Activated naive CD4-positive, alpha-beta T cell treated with anti-CD3 and anti-CD28 coated beads for 36 hours (primary cell): ENCODE measurements at regions of chr18 and their contacts with region 1.

Region 1: GRCh38 chr18:48777026-48777743 is 173.6 kb downstream of the SMAD7 start:
- DNase-seq: peak; percentile 71
- H3K4me3 Mint-ChIP-seq: no peak overlapping the region
- H3K27ac Mint-ChIP-seq: no peak overlapping the region
- H3K4me1 Mint-ChIP-seq: peaks cover 3% of the 10 kb centered on the region
- H3K27me3 Mint-ChIP-seq: no peaks in the 10 kb centered on the region

Region 2: DNA sequence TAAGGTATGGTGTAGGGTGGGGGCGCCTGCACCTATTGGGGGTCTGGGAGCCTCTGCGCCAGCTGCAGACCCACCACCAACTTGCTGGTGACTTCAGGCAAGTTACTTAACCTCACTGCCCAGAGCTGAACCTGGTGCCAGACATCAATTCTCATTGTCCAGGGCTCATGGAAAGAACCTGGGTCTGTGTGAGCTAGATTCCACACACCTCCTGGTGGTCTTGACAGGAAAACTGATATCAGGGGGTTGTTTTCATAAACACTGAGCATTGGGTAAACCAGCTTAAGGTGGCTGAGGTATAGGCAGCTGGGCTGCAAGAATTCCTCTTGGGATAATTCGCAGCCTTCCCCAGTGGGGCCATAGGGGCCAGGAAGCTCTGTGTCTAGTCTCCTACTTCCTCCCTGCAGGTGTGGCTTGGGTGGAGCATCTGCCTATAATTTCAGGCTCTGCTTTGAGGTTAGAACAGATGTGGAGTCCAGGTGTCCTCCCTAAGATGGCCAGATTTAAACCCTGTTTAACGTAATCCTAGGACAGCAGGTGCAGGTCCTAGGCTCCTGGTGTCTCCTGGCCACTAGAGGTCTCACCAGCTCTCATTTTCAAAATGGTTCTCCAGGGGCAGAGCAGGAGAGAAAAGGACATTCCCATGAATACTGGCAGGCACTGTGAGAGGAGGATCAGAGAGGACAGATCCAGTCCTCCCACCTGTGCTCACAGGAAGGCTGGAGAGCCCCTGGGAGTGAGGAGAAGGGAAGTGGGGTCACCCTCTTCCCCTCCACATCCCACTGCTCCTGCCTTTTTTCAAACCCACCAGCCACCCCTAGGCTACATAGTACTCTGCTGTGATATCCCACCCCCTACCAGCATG is 746.3 kb before region 1 on chr18:
- CTCF ChIA-PET with region 1: no interaction called
- intact Hi-C with region 1: no loop called
- DNase-seq: peak; percentile 49
- H3K4me3 Mint-ChIP-seq: no peak overlapping the region
- H3K27ac Mint-ChIP-seq: no peak overlapping the region
- H3K4me1 Mint-ChIP-seq: no peaks in the 10 kb centered on the region
- H3K27me3 Mint-ChIP-seq: no peaks in the 10 kb centered on the region

Region 3: GRCh38 chr18:48834413-48835031 is 57.3 kb after region 1 on chr18:
- CTCF ChIA-PET with region 1: no interaction called
- intact Hi-C with region 1: loop called (anchors 1 kb)
- DNase-seq: peak; percentile 86
- H3K4me3 Mint-ChIP-seq: peak overlapping the region; percentile 65
- H3K27ac Mint-ChIP-seq: peak overlapping the region; percentile 85
- H3K4me1 Mint-ChIP-seq: peaks cover 54% of the 10 kb centered on the region
- H3K27me3 Mint-ChIP-seq: no peaks in the 10 kb centered on the region

Region 4: GRCh38 chr18:48913201-48913600 is 136.0 kb after region 1 on chr18:
- CTCF ChIA-PET with region 1: interaction called, 6 read pairs
- intact Hi-C with region 1: loop called (anchors 1 kb)
- DNase-seq: peak; percentile 46
- H3K4me3 Mint-ChIP-seq: no peak overlapping the region
- H3K27ac Mint-ChIP-seq: no peak overlapping the region
- H3K4me1 Mint-ChIP-seq: peaks cover 10% of the 10 kb centered on the region
- H3K27me3 Mint-ChIP-seq: no peaks in the 10 kb centered on the region

Region 5: GRCh38 chr18:49021433-49022129 is 244.4 kb after region 1 on chr18:
- CTCF ChIA-PET with region 1: no interaction called
- intact Hi-C with region 1: no loop called
- DNase-seq: peak; percentile 78
- H3K4me3 Mint-ChIP-seq: no peak overlapping the region
- H3K27ac Mint-ChIP-seq: no peak overlapping the region
- H3K4me1 Mint-ChIP-seq: no peaks in the 10 kb centered on the region
- H3K27me3 Mint-ChIP-seq: no peaks in the 10 kb centered on the region

Region 6: DNA sequence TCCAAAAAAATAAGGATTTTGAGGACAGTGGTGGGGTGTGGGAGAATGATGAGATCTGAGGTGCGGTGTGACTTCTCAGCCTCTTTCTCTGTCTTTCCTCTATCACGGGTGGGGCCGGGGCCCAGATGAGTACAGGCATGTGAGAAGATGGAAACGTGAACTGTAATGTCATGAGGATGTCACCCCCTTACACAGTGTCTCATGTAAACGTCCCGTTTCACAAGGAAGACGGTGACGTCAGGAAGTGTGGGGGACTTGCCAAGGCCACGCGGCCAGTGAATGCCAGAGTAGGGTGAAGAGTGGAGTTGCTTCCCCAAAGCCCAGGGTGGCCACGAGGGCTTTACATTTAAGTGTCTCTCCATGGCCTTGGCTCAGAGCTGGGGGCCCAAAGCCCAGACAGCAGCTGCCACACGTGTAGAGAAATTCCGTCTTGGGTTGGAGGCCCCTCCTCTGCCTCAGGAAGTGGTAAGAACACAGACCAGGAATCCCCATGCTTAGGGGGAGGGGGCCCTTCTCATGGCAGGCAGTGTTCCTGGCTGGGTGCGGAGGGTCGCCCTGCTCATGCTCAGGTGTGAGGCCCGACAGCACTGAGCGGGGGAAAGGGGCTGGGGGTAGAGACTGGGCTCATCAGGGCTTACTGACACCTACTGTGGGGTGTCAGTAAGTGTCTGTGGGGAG is 254.5 kb after region 1 on chr18:
- CTCF ChIA-PET with region 1: no interaction called
- intact Hi-C with region 1: loop called (anchors 5 kb)
- DNase-seq: peak; percentile 77
- H3K4me3 Mint-ChIP-seq: no peak overlapping the region
- H3K27ac Mint-ChIP-seq: peak overlapping the region; percentile 59
- H3K4me1 Mint-ChIP-seq: peaks cover 19% of the 10 kb centered on the region
- H3K27me3 Mint-ChIP-seq: no peaks in the 10 kb centered on the region

Region 7: GRCh38 chr18:49250816-49251388 is 473.7 kb after region 1 on chr18:
- CTCF ChIA-PET with region 1: no interaction called
- intact Hi-C with region 1: loop called (anchors 10 kb)
- DNase-seq: no peak
- H3K4me3 Mint-ChIP-seq: no peak overlapping the region
- H3K27ac Mint-ChIP-seq: no peak overlapping the region
- H3K4me1 Mint-ChIP-seq: no peaks in the 10 kb centered on the region
- H3K27me3 Mint-ChIP-seq: no peaks in the 10 kb centered on the region

Region 8: DNA sequence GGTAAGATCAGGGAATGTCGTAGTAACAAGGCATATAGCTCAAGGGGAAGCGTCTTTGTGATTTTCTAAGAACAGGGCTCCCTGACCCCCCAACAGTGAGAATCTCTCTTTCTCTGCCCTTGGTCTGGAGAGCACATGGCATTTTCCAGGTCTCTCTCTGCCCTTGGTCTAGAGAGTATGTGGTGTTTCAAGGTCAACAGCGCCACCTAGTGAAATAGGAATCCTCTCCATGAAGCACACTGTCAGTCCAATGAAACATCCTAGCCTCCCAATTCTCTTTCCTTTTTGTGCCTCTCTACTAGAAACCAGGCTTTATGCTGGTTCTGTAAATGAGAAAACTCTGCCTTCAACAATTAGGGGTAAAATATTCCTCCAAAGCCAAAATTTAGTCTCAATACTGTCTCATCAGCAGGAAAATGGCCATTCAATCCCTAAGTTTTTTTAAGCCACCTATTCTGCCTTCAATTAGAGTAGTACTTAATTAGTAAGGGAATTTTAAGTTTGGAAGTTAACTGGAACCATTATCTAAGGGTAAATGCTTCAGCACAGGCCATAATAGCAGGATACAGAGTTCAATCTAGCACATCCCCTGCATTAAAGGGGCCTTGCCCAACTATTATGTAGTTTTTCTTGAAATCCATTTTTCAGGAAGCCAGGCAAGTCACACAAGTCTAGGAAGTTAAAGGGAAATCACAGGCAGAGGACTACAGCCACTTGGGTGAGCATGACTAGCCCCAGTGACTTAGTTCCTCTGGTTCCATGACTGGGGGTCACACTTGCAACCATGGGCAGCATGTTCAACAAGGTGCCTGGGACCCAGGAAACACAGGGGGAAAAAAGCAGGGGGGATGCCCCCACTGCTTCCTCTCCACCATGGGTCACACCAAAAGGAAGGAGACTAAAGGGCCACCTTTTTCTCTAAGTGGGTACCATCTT is 670.9 kb after region 1 on chr18:
- CTCF ChIA-PET with region 1: interaction called, 3 read pairs
- intact Hi-C with region 1: loop called (anchors 1 kb)
- DNase-seq: peak; percentile 53
- H3K4me3 Mint-ChIP-seq: no peak overlapping the region
- H3K27ac Mint-ChIP-seq: no peak overlapping the region
- H3K4me1 Mint-ChIP-seq: peaks cover 6% of the 10 kb centered on the region
- H3K27me3 Mint-ChIP-seq: no peaks in the 10 kb centered on the region